ENCODE measurements at regions of chr19 and their contacts with region 1.

Region 1: DNA sequence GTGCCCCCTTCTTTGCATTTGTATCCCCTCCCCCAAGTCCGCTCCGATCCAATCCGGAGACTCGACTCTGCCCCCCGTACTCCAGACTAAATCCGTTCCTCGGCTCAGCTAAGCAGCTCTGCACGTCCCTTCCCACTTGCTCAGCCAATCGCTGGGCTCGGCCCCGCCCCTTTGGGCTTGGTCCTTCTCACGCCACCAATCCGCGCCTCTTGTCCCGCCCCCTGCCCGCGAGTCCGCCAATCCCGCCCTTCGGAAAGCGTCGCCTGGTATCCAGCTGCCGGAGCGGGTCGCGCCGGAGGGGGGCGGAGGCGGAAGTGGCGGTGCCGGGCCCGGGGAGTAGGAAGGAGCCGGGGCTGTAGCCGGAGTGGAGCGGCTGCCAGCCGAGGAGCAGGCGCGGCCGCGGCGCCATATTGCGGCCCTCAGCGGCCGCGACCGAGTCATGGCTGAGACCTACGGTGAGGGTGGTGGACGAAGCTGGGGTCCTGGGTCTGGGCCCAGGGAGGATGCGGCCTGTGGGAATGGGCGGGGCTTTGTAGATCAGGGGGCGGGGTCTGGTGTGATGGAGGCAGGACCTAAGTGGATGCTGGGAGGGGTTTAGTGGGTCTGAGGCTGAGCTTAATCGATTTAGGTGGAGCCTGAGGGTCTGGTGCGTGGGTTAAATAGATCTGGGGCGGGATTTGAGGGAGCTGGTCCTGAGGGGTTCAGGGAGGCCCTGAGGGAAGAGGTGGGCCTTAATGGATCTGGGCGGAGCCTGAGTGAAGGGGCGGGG is at the start of gene RAB4B:
- DNase-seq: peak; percentile 100
- H3K4me3 ChIP-seq: peak within 1 kb of the TSS; percentile 56 to 76 (median 71)
- H3K27ac ChIP-seq: peak within 1 kb of the TSS; percentile 80
- H3K4me1 ChIP-seq: peaks cover 17% of the 10 kb centered on the region
- H3K27me3 ChIP-seq: no peaks in the 10 kb centered on the region
- CTCF ChIP-seq: no peak
- POLR2A ChIP-seq: no peak
- total RNA-seq, gene RAB4B: 31.4 and 33.6 TPM in 2 replicates

Region 2: DNA sequence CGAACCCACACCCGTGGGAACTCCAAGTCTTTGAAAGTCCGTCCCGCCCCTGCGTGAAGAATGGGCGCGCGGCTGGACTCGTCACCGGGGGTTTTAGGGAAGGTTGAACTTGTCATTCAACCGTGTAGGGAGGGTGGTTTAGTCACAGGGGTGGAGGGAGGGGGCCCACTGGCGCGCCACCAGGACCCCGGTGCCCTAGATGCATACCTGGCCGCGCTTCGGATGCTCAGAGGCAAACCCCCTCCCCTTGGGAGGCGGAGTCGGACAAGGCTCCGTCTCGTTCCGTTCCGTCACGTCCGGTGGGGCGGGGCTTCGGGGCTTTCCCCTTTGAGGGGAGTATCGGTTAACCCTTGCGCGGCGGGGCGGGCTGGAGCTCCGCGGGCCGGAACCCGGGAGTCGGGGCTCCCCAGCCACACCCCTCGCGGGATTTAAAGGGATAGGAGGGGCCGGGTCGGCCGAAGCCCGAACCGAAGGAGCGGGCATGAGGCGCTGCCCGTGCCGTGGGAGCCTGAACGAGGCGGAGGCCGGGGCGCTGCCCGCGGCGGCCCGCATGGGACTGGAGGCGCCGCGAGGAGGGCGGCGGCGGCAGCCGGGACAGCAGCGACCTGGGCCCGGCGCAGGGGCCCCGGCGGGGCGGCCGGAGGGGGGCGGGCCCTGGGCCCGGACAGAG is 61.3 kb before region 1 on chr19 and contains the starts of genes COQ8B and ITPKC:
- CTCF ChIA-PET with region 1: interaction called, 6 read pairs
- POLR2A ChIA-PET with region 1: interaction called, 9 read pairs
- dilution Hi-C with region 1: no loop called
- intact Hi-C with region 1: loop called (anchors 1 kb)
- DNase-seq: peak; percentile 97
- H3K4me3 ChIP-seq: peak within 1 kb of the TSS; percentile 39 to 78 (median 53)
- H3K27ac ChIP-seq: peak within 1 kb of the TSS; percentile 94
- H3K4me1 ChIP-seq: peaks cover 52% of the 10 kb centered on the region
- H3K27me3 ChIP-seq: no peaks in the 10 kb centered on the region
- CTCF ChIP-seq: no peak
- POLR2A ChIP-seq: peak; percentile 62
- total RNA-seq, gene COQ8B: 15.3 and 19.2 TPM in 2 replicates
- total RNA-seq, gene ITPKC: 16.1 and 16.9 TPM in 2 replicates

Region 3: GRCh38 chr19:40750059-40750873 is 27.9 kb before region 1 on chr19 and contains the start of gene ACTMAP:
- CTCF ChIA-PET with region 1: interaction called, 7 read pairs
- POLR2A ChIA-PET with region 1: interaction called, 17 read pairs
- dilution Hi-C with region 1: no loop called
- intact Hi-C with region 1: loop called (anchors 1 kb)
- DNase-seq: peak; percentile 100
- H3K4me3 ChIP-seq: peak within 1 kb of the TSS; percentile 56 to 86 (median 73)
- H3K27ac ChIP-seq: peak within 1 kb of the TSS; percentile 94
- H3K4me1 ChIP-seq: peaks cover 28% of the 10 kb centered on the region
- H3K27me3 ChIP-seq: no peaks in the 10 kb centered on the region
- CTCF ChIP-seq: no peak
- POLR2A ChIP-seq: peak; percentile 76
- total RNA-seq, gene ACTMAP: 7.7 and 9.1 TPM in 2 replicates

Region 4: DNA sequence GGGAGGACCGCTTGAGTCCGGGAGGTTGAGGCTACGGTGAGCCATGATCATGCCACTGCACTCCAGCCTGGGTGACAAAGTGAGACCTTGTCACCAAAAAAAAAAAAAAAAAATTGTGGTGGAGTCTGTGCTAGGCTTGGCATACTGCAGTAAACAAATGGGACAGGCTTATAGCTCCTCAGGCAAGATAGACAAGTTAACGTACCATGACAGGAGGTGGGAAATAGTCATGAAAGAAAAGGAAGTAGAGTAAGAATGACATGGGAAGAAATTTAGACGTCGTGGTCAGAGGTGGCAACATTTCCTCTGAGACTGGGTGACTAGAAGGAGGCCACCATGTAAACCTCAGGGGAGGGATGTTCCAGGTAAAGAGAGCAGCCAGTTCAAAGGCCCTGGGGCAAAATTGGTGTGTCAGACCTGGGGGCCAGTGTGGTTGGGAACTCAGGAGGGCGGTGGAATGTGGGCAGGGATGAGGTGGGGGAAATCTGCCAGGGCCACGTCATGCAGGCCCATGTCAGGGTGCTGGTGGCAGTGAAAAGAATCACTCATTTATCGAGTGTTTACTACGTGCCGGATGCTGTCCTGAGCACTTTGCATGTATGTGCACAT is 21.5 kb before region 1 on chr19:
- CTCF ChIA-PET with region 1: interaction called, 7 read pairs
- POLR2A ChIA-PET with region 1: interaction called, 17 read pairs
- dilution Hi-C with region 1: no loop called
- intact Hi-C with region 1: loop called (anchors 1 kb)
- DNase-seq: no peak
- H3K4me3 ChIP-seq: no peak overlapping the region
- H3K27ac ChIP-seq: no peak overlapping the region
- H3K4me1 ChIP-seq: peaks cover 36% of the 10 kb centered on the region
- H3K27me3 ChIP-seq: no peaks in the 10 kb centered on the region
- CTCF ChIP-seq: no peak
- POLR2A ChIP-seq: no peak

Region 5: GRCh38 chr19:40798223-40798996 is 20.3 kb after region 1 on chr19:
- CTCF ChIA-PET with region 1: interaction called, 39 read pairs
- POLR2A ChIA-PET with region 1: interaction called, 23 read pairs
- dilution Hi-C with region 1: no loop called
- intact Hi-C with region 1: loop called (anchors 1 kb)
- DNase-seq: peak; percentile 100
- H3K4me3 ChIP-seq: peak overlapping the region; percentile 43 to 79 (median 52)
- H3K27ac ChIP-seq: peak overlapping the region; percentile 71
- H3K4me1 ChIP-seq: peaks cover 42% of the 10 kb centered on the region
- H3K27me3 ChIP-seq: no peaks in the 10 kb centered on the region
- CTCF ChIP-seq: peak; percentile 12 to 32
- POLR2A ChIP-seq: no peak

Region 6: DNA sequence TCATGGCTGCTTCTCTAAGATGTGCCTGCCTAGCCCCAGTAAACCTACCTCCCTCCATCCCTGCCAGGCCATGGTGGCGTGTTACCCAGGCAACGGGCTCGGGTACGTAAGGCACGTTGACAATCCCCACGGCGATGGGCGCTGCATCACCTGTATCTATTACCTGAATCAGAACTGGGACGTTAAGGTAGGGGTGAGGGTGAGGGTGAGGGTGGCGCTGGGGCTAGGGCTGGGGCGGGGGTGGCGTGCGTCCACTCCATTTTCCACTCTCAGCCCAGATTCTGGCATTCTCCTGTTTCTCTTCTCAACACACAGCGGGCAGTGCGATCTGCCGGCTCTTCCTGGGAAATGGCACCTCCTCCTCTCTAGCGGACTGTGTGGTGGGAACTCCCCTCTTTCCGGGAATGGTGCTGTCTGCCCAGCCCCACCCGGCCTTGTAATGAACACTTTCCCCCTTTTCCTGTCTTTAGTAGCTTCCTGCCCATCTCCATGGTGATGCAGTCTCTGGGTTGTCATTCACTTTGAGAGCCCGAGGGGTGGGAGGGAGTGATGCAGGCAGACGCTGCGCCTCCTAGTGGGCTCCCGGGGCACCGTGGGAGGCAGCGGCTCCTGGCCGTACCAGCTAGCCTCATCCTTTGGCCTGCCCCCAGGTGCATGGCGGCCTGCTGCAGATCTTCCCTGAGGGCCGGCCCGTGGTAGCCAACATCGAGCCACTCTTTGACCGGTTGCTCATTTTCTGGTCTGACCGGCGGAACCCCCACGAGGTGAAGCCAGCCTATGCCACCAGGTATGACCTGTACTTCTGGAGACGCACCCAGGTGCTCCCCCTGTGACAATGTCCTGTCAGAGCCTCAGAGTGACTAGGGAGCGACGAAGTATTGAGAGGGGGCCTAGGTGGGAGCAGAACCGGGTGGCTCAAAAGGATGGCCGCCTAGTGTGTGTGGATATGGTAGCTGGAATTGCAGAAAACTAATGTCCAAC is 28.7 kb after region 1 on chr19:
- CTCF ChIA-PET with region 1: interaction called, 35 read pairs
- POLR2A ChIA-PET with region 1: interaction called, 23 read pairs
- dilution Hi-C with region 1: no loop called
- intact Hi-C with region 1: loop called (anchors 1 kb)
- DNase-seq: peak; percentile 99
- H3K4me3 ChIP-seq: peak overlapping the region in 1 of 3 experiments; percentile 9
- H3K27ac ChIP-seq: peak overlapping the region; percentile 35
- H3K4me1 ChIP-seq: peaks cover 63% of the 10 kb centered on the region
- H3K27me3 ChIP-seq: peaks cover 0 to under 1% of the 10 kb centered on the region in 2 experiments
- CTCF ChIP-seq: peak; percentile 99
- POLR2A ChIP-seq: peak; percentile 29

Region 7: DNA sequence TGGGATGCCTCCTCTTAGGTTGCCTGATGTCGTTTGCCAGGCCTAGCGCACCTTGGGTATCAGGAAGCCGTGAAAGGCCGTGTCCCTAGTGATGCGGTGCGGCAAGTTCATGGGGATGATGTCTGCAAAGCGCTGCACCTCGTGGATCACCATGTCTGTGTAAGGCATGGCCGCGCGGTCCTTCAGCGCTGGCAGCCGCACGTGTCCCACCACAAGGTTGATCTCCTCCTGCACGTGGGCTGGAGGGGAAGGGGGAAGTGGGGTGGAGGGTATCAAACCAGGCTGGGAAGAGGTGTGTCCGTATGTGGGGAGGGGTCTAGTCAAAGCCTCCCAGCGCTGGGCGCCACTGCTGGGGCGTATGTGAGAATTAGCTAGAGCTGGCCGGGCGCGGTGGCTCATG is 44.0 kb after region 1 on chr19:
- CTCF ChIA-PET with region 1: interaction called, 11 read pairs
- POLR2A ChIA-PET with region 1: no interaction called
- dilution Hi-C with region 1: no loop called
- intact Hi-C with region 1: no loop called
- DNase-seq: no peak
- H3K4me3 ChIP-seq: no peak overlapping the region
- H3K27ac ChIP-seq: no peak overlapping the region
- H3K4me1 ChIP-seq: peaks cover 6% of the 10 kb centered on the region
- H3K27me3 ChIP-seq: no peaks in the 10 kb centered on the region
- CTCF ChIP-seq: no peak
- POLR2A ChIP-seq: no peak

Region 8: DNA sequence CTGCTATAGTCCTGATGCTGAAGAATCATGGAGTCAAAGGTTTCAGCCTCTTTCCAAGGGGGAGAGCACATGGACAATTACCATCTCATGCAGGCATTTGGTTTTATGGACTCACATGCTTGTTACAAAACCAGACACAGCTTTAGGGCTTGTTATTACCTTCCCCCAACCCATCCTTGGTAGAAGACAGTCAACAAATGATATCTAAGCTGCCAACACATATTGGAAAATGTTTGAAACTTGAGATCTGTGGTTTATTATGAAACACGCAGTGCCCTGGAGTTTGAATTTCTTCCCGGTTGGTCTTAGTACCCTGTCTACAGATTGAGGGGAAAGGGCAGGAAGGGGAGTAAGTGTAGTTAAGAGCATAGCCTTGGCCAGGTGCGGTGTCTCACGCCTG is 84.7 kb after region 1 on chr19:
- CTCF ChIA-PET with region 1: no interaction called
- POLR2A ChIA-PET with region 1: no interaction called
- dilution Hi-C with region 1: no loop called
- intact Hi-C with region 1: no loop called
- DNase-seq: no peak
- H3K4me3 ChIP-seq: no peak overlapping the region
- H3K27ac ChIP-seq: no peak overlapping the region
- H3K4me1 ChIP-seq: no peaks in the 10 kb centered on the region
- H3K27me3 ChIP-seq: peaks cover 2 to 6% of the 10 kb centered on the region in 2 experiments
- CTCF ChIP-seq: no peak
- POLR2A ChIP-seq: no peak

Measured in endothelial cell of umbilical vein (primary cell).